GM18951 (cell line): ENCODE measurements at regions of chr16 and their contacts with region 1.

Region 1: DNA sequence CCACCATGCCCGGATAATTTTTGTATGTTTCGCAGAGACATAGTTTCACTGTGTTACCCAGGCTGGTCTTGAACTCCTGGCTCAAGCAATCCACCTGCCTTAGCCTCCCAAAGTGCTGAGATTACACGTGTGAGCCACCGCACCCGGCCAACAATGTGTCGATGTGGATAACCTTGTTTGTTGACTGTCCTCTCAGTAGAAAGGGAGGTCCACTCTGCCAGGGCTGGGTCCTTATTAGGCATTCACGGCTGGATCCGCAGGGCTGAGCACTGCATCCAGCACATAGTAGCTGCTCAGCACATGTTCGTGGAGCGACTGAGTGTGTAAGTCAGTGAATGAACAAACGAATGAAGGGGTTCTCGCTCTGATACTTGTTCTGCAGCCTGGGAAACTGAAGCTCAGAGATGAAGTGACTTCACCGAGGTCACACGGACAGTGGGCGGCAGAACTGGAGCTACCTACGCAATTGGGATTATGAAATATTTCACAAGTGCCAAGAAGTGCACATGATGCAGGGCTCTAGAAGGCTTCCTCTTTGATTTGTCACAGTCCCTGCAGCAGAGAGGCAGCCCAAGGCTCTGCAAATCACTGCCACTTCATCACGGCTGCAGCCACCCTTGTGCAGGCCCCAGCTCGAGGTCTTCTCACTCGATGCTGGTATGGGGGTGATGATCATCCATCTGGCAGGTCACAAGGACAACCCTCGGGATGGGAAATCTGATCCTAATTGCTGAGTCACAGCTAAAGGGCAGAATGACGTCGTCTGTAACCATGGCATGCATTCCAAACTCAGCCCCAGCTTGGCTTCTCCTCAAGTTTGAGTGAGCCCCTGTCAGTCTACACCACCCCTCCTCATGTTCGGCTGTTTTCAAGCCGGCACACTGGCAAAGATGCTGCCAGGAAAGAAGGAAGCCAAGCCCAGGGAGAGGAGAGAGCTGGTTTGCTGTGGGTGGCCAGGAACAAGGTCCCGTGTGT is 28.0 kb upstream of the SNN start:
- POLR2A ChIP-seq: no peak

Region 2: GRCh38 chr16:11526655-11527350 is 113.4 kb before region 1 on chr16:
- in situ Hi-C with region 1: loop called (anchors 5 kb)
- POLR2A ChIP-seq: no peak

Region 3: GRCh38 chr16:11586856-11587642 is 53.2 kb before region 1 on chr16 and contains the start of gene LITAF:
- in situ Hi-C with region 1: loop called (anchors 10 kb)
- POLR2A ChIP-seq: peak; percentile 93